ENCODE measurements at regions of chrX and their contacts with region 1.

Region 1: DNA sequence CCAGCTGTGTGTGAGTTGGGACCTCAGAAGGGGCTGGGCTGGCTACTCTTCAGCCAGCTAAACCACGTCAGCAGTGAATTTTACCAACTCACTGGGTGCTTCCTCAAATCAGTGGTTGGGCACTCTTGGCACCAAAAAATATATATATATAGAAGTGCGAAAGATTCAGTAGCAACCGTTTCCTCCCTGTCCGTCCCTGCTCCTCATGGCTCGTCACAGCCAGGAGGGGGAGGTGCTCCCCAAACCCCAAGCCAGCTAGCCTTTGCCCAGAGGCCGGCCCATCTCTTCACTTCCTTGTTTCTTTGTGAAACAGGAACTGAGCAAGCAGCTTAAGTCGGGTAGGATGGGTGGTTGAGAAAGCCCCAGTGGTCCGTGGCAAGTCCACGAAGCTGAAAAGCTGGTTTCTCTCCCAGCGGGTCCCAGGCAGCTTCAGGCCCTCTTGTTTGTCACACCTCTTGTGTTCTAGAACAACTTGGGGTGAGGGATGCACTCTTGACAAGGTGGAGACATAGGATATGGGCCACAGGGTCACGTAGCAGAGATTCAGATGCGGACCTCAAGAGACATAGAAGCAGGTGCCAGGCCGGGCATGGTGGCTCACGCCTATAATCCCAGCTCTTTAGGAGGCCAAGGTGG is 6.8 kb upstream of the SASH3 start:
- DNase-seq: peak; percentile 59
- ATAC-seq: peak; percentile 76
- H3K4me3 Mint-ChIP-seq: peak overlapping the region; percentile 62
- H3K27ac Mint-ChIP-seq: peak overlapping the region; percentile 97
- H3K4me1 Mint-ChIP-seq: peaks cover 84% of the 10 kb centered on the region
- H3K27me3 Mint-ChIP-seq: no peaks in the 10 kb centered on the region
- CTCF ChIP-seq: no peak

Region 2: DNA sequence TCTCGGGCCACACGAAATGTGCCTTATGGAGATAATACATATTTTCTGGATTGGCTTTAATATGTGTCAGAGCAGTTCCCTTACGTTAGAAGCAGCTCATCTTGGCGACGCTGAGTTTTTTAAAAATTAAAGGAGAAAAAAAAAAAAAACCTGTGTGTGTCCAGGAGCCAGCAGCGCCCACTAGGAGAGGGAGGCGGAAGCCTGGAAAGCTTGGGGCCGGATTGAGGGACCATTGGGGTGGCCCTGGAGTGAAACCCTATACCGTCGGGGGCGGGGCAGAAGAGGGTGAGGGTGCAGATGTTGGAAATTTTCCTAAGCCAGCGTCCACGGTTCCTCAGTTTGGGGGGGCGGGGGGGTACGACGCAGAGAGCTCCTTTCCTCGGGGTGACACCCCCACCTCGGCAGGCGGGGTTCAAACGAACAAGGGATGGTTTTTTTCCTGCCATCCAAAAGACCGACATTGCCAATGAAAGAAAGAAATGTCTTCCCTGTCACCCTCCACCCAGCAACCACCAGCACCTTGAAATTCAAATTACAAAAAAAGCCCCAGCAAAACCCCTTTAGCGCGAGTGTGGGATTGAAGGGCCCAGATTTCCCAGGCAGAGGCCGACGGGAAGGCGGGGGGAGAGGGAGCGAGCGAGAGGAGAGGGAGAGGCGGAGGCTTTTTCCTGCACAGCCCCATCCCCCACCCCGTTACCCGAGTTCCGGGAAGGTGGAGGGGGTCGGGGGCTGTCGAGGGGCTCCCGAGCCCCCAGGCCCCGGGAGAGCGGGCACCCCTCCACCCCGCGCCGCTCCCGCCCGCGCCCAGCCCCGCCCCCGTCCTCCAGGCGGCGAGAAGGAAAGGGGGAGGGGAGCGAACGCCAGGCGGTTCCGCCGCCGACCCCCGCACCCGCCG is 250.5 kb before region 1 on chrX:
- CTCF ChIA-PET with region 1: no interaction called
- POLR2A ChIA-PET with region 1: no interaction called
- intact Hi-C with region 1: no loop called
- DNase-seq: no peak
- ATAC-seq: peak; percentile 49
- H3K4me3 Mint-ChIP-seq: peak overlapping the region; percentile 84
- H3K27ac Mint-ChIP-seq: no peak overlapping the region
- H3K4me1 Mint-ChIP-seq: peaks cover 3% of the 10 kb centered on the region
- H3K27me3 Mint-ChIP-seq: peaks cover 2% of the 10 kb centered on the region
- CTCF ChIP-seq: no peak

Region 3: GRCh38 chrX:129737916-129738315 is 35.0 kb before region 1 on chrX:
- CTCF ChIA-PET with region 1: interaction called, 5 read pairs
- POLR2A ChIA-PET with region 1: interaction called, 48 read pairs
- intact Hi-C with region 1: loop called (anchors 2 kb)
- DNase-seq: no peak
- ATAC-seq: peak; percentile 79
- H3K4me3 Mint-ChIP-seq: no peak overlapping the region
- H3K27ac Mint-ChIP-seq: peak overlapping the region; percentile 63
- H3K4me1 Mint-ChIP-seq: peaks cover 36% of the 10 kb centered on the region
- H3K27me3 Mint-ChIP-seq: no peaks in the 10 kb centered on the region
- CTCF ChIP-seq: no peak

Region 4: DNA sequence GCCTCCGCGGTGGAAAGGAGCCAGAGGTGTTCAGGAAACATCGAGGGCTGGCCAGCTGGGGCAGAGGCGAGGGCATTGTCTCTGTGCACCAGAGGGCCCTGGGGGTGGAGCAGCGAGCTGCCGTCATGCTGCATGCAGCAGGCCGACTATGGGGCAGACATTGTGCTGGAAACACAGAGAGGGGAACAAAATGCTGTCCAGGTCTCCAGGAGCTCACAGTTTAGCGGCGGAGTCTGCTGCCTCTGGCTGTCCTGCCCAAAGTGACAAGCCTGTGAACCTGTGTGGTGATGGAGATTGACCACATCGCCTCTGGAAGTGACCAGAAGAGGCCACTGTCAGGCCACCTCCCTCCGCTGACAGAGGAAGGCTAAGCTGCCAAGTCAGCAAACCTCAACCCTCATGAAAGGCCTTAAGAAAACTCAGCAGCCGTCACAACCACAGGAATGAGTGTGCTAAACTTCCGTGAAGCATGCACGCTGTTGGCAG is 13.3 kb before region 1 on chrX:
- CTCF ChIA-PET with region 1: interaction called, 8 read pairs
- POLR2A ChIA-PET with region 1: interaction called, 261 read pairs
- intact Hi-C with region 1: loop called (anchors 1 kb)
- DNase-seq: no peak
- ATAC-seq: peak; percentile 28
- H3K4me3 Mint-ChIP-seq: no peak overlapping the region
- H3K27ac Mint-ChIP-seq: peak overlapping the region; percentile 85
- H3K4me1 Mint-ChIP-seq: peaks cover 58% of the 10 kb centered on the region
- H3K27me3 Mint-ChIP-seq: no peaks in the 10 kb centered on the region
- CTCF ChIP-seq: no peak

Region 5: DNA sequence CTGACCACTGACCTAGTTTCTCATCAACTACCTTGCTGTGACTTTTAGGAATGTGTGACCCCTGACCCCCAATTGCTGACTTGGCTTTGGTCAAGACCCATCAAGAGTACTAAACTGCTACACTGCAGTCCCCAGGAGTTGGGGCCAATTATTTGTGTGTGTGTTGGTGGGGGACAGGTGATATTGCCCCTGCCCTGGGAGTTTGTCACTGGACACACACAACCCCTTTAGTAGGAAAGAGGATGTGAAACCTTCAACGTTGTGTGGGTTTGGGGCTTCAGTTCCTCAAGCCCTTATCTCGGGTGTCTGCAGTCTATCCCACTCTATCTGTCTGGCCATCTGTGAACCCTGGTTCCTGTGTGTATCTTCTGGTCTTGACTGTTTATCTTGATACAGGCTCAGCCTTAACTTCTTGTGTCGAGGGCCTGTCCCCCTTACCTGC is 13.3 kb after region 1 on chrX:
- CTCF ChIA-PET with region 1: interaction called, 7 read pairs
- POLR2A ChIA-PET with region 1: interaction called, 167 read pairs
- intact Hi-C with region 1: loop called (anchors 1 kb)
- DNase-seq: no peak
- ATAC-seq: peak; percentile 73
- H3K4me3 Mint-ChIP-seq: peak overlapping the region; percentile 77
- H3K27ac Mint-ChIP-seq: peak overlapping the region; percentile 85
- H3K4me1 Mint-ChIP-seq: peaks cover 64% of the 10 kb centered on the region
- H3K27me3 Mint-ChIP-seq: no peaks in the 10 kb centered on the region
- CTCF ChIP-seq: no peak